ENCODE measurements at regions of chr18 and their contacts with region 1.

Region 1: GRCh38 chr18:3454365-3455089 is 4.6 kb downstream of the TGIF1 start:
- DNase-seq: peak; percentile 66
- ATAC-seq: no peak
- H3K4me3 ChIP-seq: peak overlapping the region; percentile 82 to 93 (median 93); a peak in 5 of 6 replicates
- H3K27ac ChIP-seq: peak overlapping the region; percentile 90
- H3K4me1 ChIP-seq: peaks cover 49% of the 10 kb centered on the region
- H3K27me3 ChIP-seq: no peaks in the 10 kb centered on the region; a peak in 1 of 5 replicates
- CTCF ChIP-seq: peak; percentile 67
- EP300 ChIP-seq: no peak
- POLR2A ChIP-seq: peak in 1 of 2 experiments; percentile 57; a peak in 2 of 4 replicates
- RAD21 ChIP-seq: peak; percentile 32; the same call in 1 of the 2 replicates

Region 2: GRCh38 chr18:3261371-3262246 is 192.9 kb before region 1 on chr18 and contains the start of gene MYL12B:
- CTCF ChIA-PET with region 1: no interaction called
- POLR2A ChIA-PET with region 1: no interaction called
- in situ Hi-C with region 1: no loop called
- intact Hi-C with region 1: loop called (anchors 5 kb)
- DNase-seq: peak; percentile 72
- ATAC-seq: peak; percentile 92
- H3K4me3 ChIP-seq: peak within 1 kb of the TSS; percentile 90 to 96 (median 94)
- H3K27ac ChIP-seq: peak within 1 kb of the TSS; percentile 96
- H3K4me1 ChIP-seq: peaks cover 64% of the 10 kb centered on the region
- H3K27me3 ChIP-seq: no peaks in the 10 kb centered on the region; a peak in 2 of 5 replicates
- CTCF ChIP-seq: no peak
- EP300 ChIP-seq: peak in 1 of 2 experiments; percentile 50; a peak in 1 of 4 replicates
- POLR2A ChIP-seq: peak; percentile 70 to 75
- RAD21 ChIP-seq: peak; percentile 60; the same call in 1 of the 2 replicates
- total RNA-seq, gene MYL12B: 340 and 475 TPM in 2 replicates

Region 3: DNA sequence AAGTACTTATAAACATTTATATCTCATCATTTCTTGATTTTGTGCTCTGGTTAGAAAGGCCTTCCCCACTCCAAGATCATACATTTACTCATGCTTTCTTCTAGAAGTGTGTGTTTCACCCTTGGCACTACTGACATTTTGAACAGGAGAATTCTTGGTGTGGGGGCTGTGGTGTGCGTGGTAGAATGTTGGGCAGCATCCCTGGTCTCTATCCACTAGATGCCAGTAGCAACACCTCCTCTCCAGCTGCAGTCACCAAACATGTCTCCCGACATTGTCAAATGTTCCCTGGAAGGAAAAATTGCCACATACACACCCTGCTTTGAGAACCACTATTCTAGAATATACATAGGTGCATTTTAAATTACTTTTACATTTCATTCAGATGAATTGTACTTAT is 13.2 kb before region 1 on chr18:
- CTCF ChIA-PET with region 1: no interaction called
- POLR2A ChIA-PET with region 1: no interaction called
- in situ Hi-C with region 1: no loop called
- intact Hi-C with region 1: loop called (anchors 1 kb)
- DNase-seq: peak; percentile 41
- ATAC-seq: peak; percentile 90
- H3K4me3 ChIP-seq: no peak overlapping the region
- H3K27ac ChIP-seq: no peak overlapping the region
- H3K4me1 ChIP-seq: peaks cover 15% of the 10 kb centered on the region
- H3K27me3 ChIP-seq: no peaks in the 10 kb centered on the region; a peak in 2 of 5 replicates
- CTCF ChIP-seq: peak; percentile 59
- EP300 ChIP-seq: no peak
- POLR2A ChIP-seq: no peak
- RAD21 ChIP-seq: no peak

Measured in HepG2 (cell line).